ENCODE measurements at regions of chr6 and their contacts with region 1.

Region 1: GRCh38 chr6:27893059-27893835 is 18.9 kb downstream of the OR2B2 start:
- DNase-seq: peak; percentile 93
- H3K4me3 Mint-ChIP-seq: no peak overlapping the region
- H3K27ac Mint-ChIP-seq: no peak overlapping the region
- H3K4me1 Mint-ChIP-seq: peaks cover 61% of the 10 kb centered on the region
- H3K27me3 Mint-ChIP-seq: no peaks in the 10 kb centered on the region

Region 2: GRCh38 chr6:26122793-26123674 is 1770.2 kb before region 1 on chr6:
- intact Hi-C with region 1: loop called (anchors 5 kb)
- DNase-seq: peak; percentile 86
- H3K4me3 Mint-ChIP-seq: peak overlapping the region; percentile 99
- H3K27ac Mint-ChIP-seq: peak overlapping the region; percentile 100
- H3K4me1 Mint-ChIP-seq: peaks cover 49% of the 10 kb centered on the region
- H3K27me3 Mint-ChIP-seq: peaks cover 3% of the 10 kb centered on the region

Region 3: GRCh38 chr6:26312501-26313390 is 1580.5 kb before region 1 on chr6:
- intact Hi-C with region 1: loop called (anchors 10 kb)
- DNase-seq: peak; percentile 72
- H3K4me3 Mint-ChIP-seq: peak overlapping the region; percentile 84
- H3K27ac Mint-ChIP-seq: peak overlapping the region; percentile 92
- H3K4me1 Mint-ChIP-seq: peaks cover 51% of the 10 kb centered on the region
- H3K27me3 Mint-ChIP-seq: no peaks in the 10 kb centered on the region

Region 4: GRCh38 chr6:27146706-27147505 is 746.3 kb before region 1 on chr6:
- intact Hi-C with region 1: loop called (anchors 1 kb)
- DNase-seq: peak; percentile 82
- H3K4me3 Mint-ChIP-seq: no peak overlapping the region
- H3K27ac Mint-ChIP-seq: no peak overlapping the region
- H3K4me1 Mint-ChIP-seq: peaks cover 17% of the 10 kb centered on the region
- H3K27me3 Mint-ChIP-seq: no peaks in the 10 kb centered on the region

Region 5: GRCh38 chr6:27503436-27504030 is 389.7 kb before region 1 on chr6:
- intact Hi-C with region 1: loop called (anchors 2 kb)
- DNase-seq: peak; percentile 60
- H3K4me3 Mint-ChIP-seq: peak overlapping the region; percentile 90
- H3K27ac Mint-ChIP-seq: peak overlapping the region; percentile 82
- H3K4me1 Mint-ChIP-seq: peaks cover 32% of the 10 kb centered on the region
- H3K27me3 Mint-ChIP-seq: peaks cover 42% of the 10 kb centered on the region

Region 6: DNA sequence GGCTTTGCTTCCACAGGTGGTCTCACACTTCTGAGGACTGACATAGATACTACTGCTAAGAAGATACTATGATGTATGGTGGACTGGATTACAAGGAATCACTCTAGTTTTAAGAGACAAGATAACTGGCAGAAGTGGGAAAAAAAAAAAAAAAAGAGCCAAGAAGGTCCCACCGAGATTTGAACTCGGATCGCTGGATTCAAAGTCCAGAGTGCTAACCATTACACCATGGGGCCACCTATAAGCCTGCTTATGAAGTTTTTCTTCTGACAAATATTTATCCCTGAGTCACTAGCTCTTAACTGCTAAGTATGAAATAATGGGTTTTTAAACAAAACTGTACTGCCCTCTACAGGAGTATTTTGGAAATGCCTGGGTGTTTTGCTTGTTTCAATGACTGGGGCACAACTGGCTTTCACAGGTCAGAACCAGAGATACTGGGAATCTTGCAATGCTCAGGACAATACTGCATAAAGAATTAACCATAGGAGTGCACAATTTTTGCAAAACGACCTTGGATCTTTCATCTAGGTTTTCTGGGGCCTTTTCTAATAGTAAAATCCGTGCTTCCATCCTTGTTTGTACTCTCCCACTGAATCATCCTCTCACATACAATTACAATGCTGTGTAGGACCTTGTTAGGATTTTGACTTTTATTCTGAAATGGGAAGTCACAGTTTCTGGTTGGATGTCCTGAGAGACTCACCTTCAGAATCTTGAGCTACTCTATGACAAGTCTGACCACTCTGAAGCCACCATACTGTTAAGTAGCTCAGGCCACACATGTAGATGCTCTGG is 97.4 kb before region 1 on chr6:
- intact Hi-C with region 1: loop called (anchors 1 kb)
- DNase-seq: peak; percentile 58
- H3K4me3 Mint-ChIP-seq: no peak overlapping the region
- H3K27ac Mint-ChIP-seq: peak overlapping the region; percentile 65
- H3K4me1 Mint-ChIP-seq: peaks cover 42% of the 10 kb centered on the region
- H3K27me3 Mint-ChIP-seq: peaks cover 12% of the 10 kb centered on the region

Region 7: GRCh38 chr6:27879837-27880236 is 13.4 kb before region 1 on chr6:
- intact Hi-C with region 1: loop called (anchors 1 kb)
- DNase-seq: no peak
- H3K4me3 Mint-ChIP-seq: no peak overlapping the region
- H3K27ac Mint-ChIP-seq: peak overlapping the region; percentile 23
- H3K4me1 Mint-ChIP-seq: no peaks in the 10 kb centered on the region
- H3K27me3 Mint-ChIP-seq: no peaks in the 10 kb centered on the region